ENCODE measurements at regions of chr10 and their contacts with region 1.

Region 1: DNA sequence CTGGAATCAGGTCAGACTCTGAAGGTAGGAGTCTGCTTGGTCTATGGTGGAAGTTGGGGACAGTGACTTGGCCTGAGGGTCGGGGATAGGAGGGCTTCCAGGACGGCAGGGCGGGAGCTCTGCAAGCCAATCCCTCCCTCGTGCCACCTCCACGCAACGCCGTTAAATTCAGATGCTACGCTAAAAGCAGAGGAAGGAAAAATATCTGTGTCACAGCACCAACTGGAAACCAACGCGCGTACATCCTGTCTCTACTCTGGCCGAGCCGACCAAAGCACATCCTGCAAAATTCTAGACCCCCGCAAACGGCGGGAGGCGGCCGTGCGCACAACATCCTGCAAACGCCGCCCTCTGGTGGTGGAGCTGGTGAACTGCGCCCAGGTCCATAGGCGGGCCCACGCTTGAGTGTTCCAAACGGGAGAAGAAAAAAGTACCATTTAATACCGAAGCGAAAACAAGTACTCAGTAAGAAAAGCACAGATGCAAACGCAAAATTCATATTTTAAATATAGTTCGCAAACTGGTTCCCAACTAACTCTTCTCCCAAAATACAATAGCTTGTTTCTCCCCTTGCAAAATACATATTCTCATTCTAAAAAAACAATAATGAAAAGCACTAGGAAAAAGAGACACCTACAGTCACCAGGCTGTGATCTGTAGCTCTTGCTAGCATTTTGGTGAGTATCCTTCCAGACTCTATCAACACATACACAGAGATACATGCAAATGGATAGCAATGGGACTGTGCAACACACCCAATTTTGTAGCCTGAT is 45.7 kb upstream of the HSPA12A start:
- DNase-seq: peak; percentile 81
- H3K4me3 ChIP-seq: peak overlapping the region; percentile 53
- H3K27ac ChIP-seq: no peak overlapping the region
- H3K4me1 ChIP-seq: peaks cover 5% of the 10 kb centered on the region
- H3K27me3 ChIP-seq: peaks cover 24% of the 10 kb centered on the region
- CTCF ChIP-seq: peak; percentile 100

Region 2: DNA sequence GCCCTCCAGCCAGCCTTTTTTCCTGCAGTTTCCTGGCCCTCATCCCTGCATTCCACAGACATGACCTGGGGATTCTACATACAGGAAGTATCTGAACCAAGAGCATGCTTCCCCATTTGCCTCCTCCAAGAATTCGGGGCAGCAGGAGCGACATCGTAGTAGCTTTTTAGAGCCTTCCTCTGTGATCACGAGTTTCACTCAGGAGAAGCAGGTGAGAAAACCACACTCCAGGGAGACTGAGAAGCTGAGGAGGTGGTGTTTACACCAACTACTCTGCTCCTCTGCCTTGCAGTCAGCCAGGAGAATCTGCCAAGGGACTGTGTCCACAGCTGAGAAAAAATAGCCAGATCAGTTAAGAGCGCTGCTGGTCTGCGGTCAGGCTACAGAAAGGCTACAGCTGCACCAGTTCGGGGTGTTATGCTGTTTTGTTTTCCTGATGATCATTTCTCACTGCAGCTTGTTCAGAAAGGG is 99.8 kb before region 1 on chr10:
- intact Hi-C with region 1: loop called (anchors 5 kb)
- DNase-seq: no peak
- H3K4me3 ChIP-seq: peak overlapping the region; percentile 25
- H3K27ac ChIP-seq: peak overlapping the region; percentile 68
- H3K4me1 ChIP-seq: peaks cover 56% of the 10 kb centered on the region
- H3K27me3 ChIP-seq: no peaks in the 10 kb centered on the region
- CTCF ChIP-seq: no peak

Measured in left ventricle myocardium inferior (tissue), 1 donor.